ENCODE measurements at regions of chr12 and their contacts with region 1.

Region 1: GRCh38 chr12:14257734-14258574 is 107.5 kb upstream of the ATF7IP start:
- DNase-seq: peak; percentile 92 to 93
- H3K4me3 ChIP-seq: peak overlapping the region in 2 of 3 donors; percentile 17 to 42
- H3K27ac ChIP-seq: peak overlapping the region; percentile 91 to 94
- H3K4me1 ChIP-seq: peaks cover 10 to 21% of the 10 kb centered on the region in 2 donors
- H3K27me3 ChIP-seq: no peaks in the 10 kb centered on the region
- CTCF ChIP-seq: peak in 1 of 3 donors; percentile 16
- POLR2A ChIP-seq: peak; percentile 9

Region 2: DNA sequence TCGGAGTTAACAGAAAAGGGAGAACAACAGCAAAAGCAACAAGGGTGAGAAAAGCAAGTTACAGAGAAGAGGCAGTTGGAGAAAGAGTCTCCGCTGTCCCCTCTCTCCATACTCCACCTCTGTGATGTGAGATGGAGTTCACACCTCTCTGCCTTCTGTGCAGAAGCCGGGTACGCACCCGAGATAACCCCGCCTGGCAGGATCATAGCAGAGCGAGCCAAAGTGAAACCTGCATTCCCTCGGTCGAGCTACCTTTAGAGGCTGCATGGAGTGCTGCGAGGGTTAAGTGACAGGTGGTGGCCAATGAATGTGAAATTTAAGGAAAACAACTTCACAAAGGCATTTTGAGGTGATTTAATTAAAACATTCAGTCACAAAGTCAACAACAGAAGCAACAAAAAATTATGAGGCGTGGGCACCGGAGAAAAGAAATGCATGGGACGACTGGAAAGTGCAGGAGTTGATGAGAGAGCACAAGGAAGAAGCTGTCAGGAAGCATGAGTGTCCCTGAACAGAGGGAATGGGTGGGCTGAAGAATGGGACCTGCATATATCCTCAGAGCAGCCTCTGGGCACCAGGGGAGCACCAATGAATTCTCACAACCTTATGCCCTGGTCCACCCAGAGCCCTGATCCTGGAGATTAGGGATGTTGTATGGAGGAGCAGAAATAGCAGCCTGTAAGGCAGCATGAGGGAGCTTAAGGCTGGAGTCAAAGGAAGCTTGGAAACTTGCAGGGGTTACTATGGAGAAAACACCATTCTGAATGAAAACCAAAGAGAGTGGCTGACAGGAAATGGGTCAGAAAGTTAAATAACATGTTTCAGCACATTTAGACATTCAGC is 853.1 kb before region 1 on chr12:
- intact Hi-C with region 1: no loop called
- DNase-seq: no peak
- H3K4me3 ChIP-seq: peak overlapping the region in 1 of 3 donors; percentile 28
- H3K27ac ChIP-seq: no peak overlapping the region
- H3K4me1 ChIP-seq: no peaks in the 10 kb centered on the region
- H3K27me3 ChIP-seq: no peaks in the 10 kb centered on the region
- CTCF ChIP-seq: no peak
- POLR2A ChIP-seq: no peak

Region 3: GRCh38 chr12:14216405-14217294 is 41.3 kb before region 1 on chr12:
- intact Hi-C with region 1: no loop called
- DNase-seq: no peak
- H3K4me3 ChIP-seq: peak overlapping the region in 1 of 3 donors; percentile 50
- H3K27ac ChIP-seq: no peak overlapping the region
- H3K4me1 ChIP-seq: no peaks in the 10 kb centered on the region
- H3K27me3 ChIP-seq: no peaks in the 10 kb centered on the region
- CTCF ChIP-seq: no peak
- POLR2A ChIP-seq: no peak

Region 4: DNA sequence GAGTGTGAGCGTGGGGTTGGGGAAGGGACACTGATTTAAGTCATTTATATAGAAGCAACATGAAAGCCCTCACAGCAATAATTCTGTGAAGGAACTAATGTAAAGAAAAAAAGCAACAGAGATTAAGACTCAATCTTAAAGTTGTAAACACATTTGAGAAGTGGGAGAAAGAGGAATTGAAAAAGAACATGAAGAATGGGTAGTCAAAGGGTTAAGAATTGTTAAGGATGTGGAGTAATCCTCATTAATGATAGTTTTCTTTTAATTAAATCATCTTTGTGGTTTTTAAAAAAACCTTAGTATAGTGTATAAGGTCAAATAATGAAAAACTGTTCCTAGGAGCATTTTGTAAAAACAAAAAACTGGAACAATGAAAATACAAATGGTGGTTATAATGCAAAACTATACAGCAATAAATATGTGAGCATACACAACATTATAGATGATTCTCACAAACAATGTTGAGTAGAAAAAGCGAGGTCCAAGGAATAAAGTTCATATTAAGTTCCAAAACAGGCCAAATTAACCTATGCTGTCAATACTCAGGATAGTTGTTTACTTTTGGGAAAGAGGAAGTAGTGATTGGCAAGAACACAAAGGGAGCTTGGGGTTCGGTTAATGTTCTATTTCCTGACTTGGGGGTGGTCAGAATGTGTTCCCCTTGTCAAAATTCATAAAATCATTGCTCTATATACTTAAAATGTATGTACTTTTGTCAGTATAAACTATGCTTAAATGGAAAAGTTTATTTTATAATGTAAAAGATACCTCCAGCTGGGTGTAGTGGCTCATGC is 12.9 kb before region 1 on chr12:
- intact Hi-C with region 1: no loop called
- DNase-seq: no peak
- H3K4me3 ChIP-seq: no peak overlapping the region
- H3K27ac ChIP-seq: no peak overlapping the region
- H3K4me1 ChIP-seq: no peaks in the 10 kb centered on the region
- H3K27me3 ChIP-seq: no peaks in the 10 kb centered on the region
- CTCF ChIP-seq: no peak
- POLR2A ChIP-seq: no peak

Region 5: GRCh38 chr12:14365294-14366208 is 107.6 kb after region 1 on chr12 and contains the start of gene ATF7IP:
- intact Hi-C with region 1: loop called (anchors 5 kb)
- DNase-seq: peak; percentile 94 to 97
- H3K4me3 ChIP-seq: peak within 1 kb of the TSS; percentile 74 to 75 (median 75)
- H3K27ac ChIP-seq: peak within 1 kb of the TSS; percentile 97 to 99
- H3K4me1 ChIP-seq: no peaks in the 10 kb centered on the region
- H3K27me3 ChIP-seq: no peaks in the 10 kb centered on the region
- CTCF ChIP-seq: no peak
- POLR2A ChIP-seq: peak; percentile 68
- total RNA-seq, gene ATF7IP: 45.4 to 81.2 (median 48.8) TPM

Region 6: GRCh38 chr12:14995583-14996425 is 737.9 kb after region 1 on chr12:
- intact Hi-C with region 1: loop called (anchors 10 kb)
- DNase-seq: no peak
- H3K4me3 ChIP-seq: no peak overlapping the region
- H3K27ac ChIP-seq: no peak overlapping the region
- H3K4me1 ChIP-seq: no peaks in the 10 kb centered on the region
- H3K27me3 ChIP-seq: no peaks in the 10 kb centered on the region
- CTCF ChIP-seq: peak; percentile 30 to 76 (median 71)
- POLR2A ChIP-seq: no peak

Region 7: DNA sequence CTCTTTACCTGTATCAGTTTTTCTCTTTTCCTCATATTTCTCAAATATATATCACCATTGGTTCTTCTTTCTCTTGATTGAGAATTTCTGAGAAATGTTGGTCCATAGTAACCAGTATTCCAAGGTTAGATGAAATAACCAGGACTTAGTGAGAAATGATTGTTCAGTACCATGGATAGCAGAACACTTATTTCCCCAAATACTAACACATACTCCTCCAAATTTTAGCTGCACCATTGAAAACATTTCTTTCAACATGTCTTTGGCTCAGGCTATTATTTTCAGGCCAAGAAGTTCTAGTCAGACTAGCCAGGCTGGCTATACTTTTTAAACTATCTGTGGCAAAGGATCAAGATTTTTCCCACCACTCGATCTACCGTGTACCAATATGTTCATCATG is 1177.6 kb after region 1 on chr12:
- intact Hi-C with region 1: no loop called
- DNase-seq: no peak
- H3K4me3 ChIP-seq: no peak overlapping the region
- H3K27ac ChIP-seq: no peak overlapping the region
- H3K4me1 ChIP-seq: no peaks in the 10 kb centered on the region
- H3K27me3 ChIP-seq: no peaks in the 10 kb centered on the region
- CTCF ChIP-seq: no peak
- POLR2A ChIP-seq: no peak